Vagina (tissue), 2 donors: ENCODE measurements at regions of chr16 and their contacts with region 1.

Region 1: DNA sequence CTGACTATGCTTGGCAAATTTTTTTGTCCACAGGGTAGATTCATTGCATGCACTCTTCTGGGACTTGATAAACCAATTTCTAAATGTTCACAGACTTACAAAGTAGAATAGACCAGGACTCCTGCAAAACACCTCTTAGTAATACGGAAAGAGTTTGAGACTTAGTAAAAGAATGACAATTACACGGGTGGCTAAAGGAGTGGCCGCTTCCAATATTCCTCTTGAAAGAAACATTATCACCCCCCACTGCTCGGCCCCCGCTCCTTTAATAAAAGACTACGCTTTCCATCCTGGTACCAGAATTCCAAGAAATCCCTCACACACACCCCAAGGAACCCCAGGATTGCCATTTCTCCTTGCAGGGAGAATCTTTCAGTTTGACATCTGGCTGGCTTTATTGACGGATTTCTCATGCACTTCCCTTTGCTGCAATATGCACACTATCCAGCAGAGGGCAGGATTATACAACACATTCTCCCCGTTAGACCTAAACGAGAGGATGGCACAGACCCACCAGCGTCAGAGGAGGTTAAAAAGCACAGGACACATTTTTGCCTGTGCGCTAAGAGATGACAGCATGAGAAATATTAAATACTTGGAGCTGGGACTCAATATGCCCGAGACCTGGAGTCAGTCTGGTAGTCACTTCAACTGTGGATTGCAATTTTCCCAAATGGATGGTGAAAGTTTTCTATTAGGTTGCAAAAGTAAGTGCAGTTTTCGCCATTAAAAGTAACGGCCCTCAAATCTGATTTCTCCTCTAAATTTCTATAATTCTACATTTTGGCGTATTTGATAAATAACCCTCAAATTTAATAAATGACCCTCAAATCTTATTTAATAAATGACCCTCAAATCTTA is 46.6 kb upstream of the NUDT7 start:
- DNase-seq: no peak
- H3K4me3 ChIP-seq: no peak overlapping the region
- H3K27ac ChIP-seq: no peak overlapping the region
- H3K4me1 ChIP-seq: peaks cover 4% of the 10 kb centered on the region
- H3K27me3 ChIP-seq: no peaks in the 10 kb centered on the region
- CTCF ChIP-seq: peak; percentile 81 to 92 (median 89)
- POLR2A ChIP-seq: no peak

Region 2: GRCh38 chr16:77971306-77972271 is 295.9 kb after region 1 on chr16:
- intact Hi-C with region 1: loop called (anchors 5 kb)
- DNase-seq: no peak
- H3K4me3 ChIP-seq: no peak overlapping the region
- H3K27ac ChIP-seq: no peak overlapping the region
- H3K4me1 ChIP-seq: no peaks in the 10 kb centered on the region
- H3K27me3 ChIP-seq: no peaks in the 10 kb centered on the region
- CTCF ChIP-seq: peak in 2 of 3 experiments; percentile 79 to 89
- POLR2A ChIP-seq: no peak

Region 3: DNA sequence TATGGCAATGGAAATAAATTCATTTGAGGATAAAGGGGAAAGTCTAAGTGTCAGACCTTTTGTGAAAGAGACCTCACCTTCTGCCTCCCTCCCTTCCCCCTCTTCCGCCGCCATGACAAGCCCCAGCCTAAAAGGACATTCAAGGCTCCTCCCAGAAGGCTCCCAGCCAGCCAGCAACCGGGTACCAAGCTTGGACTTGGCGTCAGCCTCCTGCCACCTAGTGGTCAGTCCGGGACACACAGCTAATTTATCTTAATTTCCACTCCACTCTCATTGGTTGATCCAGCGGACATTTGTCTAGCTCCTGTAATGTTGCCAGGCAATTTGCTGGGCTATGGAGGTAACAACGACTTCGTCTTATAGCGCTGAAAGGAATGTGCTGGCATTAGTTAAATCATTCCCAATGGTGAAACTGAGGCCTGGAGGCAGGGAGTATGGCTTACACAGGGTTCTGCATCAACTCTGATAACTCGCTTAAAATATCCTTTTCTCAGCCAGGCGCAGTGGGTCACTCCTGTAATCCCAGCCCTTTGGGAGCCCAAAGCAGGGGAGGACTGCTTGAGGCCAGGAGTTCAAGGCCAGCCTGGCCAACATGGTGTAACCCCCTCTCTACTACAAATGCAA is 327.3 kb after region 1 on chr16:
- intact Hi-C with region 1: loop called (anchors 10 kb)
- DNase-seq: no peak
- H3K4me3 ChIP-seq: no peak overlapping the region
- H3K27ac ChIP-seq: no peak overlapping the region
- H3K4me1 ChIP-seq: peaks cover 8% of the 10 kb centered on the region
- H3K27me3 ChIP-seq: no peaks in the 10 kb centered on the region
- CTCF ChIP-seq: peak; percentile 54 to 82 (median 65)
- POLR2A ChIP-seq: no peak